PC-9 (cell line): ENCODE measurements at regions of chr5 and their contacts with region 1.

Region 1: GRCh38 chr5:41932770-41933169 is 7.7 kb downstream of the FBXO4 start:
- DNase-seq: no peak
- H3K4me3 ChIP-seq: no peak overlapping the region
- H3K27ac ChIP-seq: no peak overlapping the region
- H3K4me1 ChIP-seq: no peaks in the 10 kb centered on the region
- H3K27me3 ChIP-seq: no peaks in the 10 kb centered on the region
- CTCF ChIP-seq: no peak

Region 2: DNA sequence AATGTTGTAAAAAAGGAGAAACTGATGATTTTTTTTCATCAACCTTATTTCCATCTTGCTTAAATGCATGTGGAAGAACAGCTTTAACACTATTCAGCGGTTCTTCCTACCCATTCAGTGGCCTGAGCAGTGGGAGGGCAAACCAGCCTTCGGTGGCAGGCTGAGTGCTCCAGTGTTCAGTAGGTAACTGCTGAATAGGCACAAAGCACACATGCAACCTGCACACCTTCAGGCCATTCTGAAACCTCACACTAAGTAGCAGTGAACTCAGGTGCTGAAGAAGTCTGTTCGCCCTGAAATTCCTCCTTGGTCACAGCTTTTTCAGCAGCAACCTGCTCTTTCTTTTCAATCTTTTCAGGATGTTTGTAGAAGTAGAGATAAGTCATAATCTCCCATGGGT is 18.5 kb after region 1 on chr5:
- CTCF ChIA-PET with region 1: interaction called, 11 read pairs
- POLR2A ChIA-PET with region 1: no interaction called
- intact Hi-C with region 1: no loop called
- DNase-seq: no peak
- H3K4me3 ChIP-seq: no peak overlapping the region
- H3K27ac ChIP-seq: no peak overlapping the region
- H3K4me1 ChIP-seq: no peaks in the 10 kb centered on the region
- H3K27me3 ChIP-seq: no peaks in the 10 kb centered on the region
- CTCF ChIP-seq: no peak

Region 3: DNA sequence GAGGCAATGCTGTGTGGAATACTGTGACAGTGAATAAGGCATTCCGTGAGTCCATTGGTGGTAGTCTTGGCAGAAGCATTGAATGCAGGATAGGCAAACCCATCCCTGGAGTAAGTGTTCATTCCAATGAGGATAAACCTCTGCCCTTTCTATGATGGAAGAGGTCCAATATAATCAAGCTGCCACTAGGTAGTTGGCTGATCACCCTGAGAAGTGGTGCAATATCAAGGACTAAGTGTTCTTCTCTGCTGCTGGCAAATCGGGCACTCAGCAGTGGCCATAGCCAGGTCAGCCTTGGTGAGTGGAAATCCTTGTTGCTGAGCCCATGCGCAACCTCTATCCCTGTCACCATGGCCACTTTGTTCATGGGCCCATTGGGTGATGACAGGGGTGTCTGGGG is 62.4 kb after region 1 on chr5:
- CTCF ChIA-PET with region 1: no interaction called
- POLR2A ChIA-PET with region 1: no interaction called
- intact Hi-C with region 1: no loop called
- DNase-seq: no peak
- H3K4me3 ChIP-seq: no peak overlapping the region
- H3K27ac ChIP-seq: no peak overlapping the region
- H3K4me1 ChIP-seq: no peaks in the 10 kb centered on the region
- H3K27me3 ChIP-seq: peaks cover 22% of the 10 kb centered on the region
- CTCF ChIP-seq: no peak